ENCODE measurements at regions of chr15 and their contacts with region 1.

Region 1: DNA sequence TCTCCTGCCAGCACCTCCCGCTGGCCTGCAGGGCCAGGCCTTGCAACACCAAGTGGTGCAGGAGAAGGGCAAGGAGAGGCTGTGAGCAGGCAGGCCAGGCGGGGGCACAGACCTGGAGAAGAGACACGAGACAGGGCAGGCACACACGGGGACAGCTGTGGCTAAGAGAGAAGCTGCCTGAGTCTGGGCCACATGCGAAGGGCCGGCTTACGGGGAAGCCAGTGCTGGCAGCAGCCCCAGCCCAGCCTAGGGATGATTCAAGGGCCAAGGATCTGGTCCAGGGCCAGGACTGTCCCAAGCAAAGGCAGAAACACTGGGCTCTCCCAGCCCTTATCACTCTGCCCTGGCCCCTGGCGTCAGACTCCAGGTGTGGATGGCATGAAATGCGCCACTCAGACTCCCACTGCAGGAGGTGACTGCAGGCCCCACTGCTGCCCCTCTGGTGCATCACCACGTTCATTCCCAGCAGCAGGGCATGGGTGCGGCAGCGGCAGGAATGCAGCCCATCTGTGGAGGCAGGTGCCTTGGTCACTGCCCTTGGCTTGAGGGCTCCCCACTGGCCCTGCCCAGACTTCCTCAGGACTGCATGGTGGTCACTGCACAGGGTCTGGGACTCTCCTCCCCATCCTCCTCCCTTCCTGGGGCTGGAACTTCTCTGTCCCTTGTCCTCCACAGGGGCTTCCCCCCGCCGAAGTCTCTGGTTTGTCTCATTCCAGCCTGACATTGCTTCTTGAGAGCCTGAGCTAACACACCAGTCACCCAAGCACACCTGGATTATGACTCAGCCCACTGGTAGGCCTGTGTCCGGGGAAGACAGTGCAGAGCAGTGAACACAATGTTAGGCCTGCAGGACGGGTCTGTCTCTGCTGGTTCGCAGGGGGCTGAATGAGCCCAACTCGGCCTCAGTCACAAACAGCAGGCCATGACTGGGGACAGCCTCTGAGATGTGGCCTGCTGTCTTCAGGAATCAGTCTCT is 69.3 kb downstream of the TBC1D2B start:
- DNase-seq: peak; percentile 82 to 86
- H3K4me3 ChIP-seq: no peak overlapping the region
- H3K27ac ChIP-seq: peak overlapping the region; percentile 49
- H3K4me1 ChIP-seq: peaks cover 41% of the 10 kb centered on the region
- H3K27me3 ChIP-seq: no peaks in the 10 kb centered on the region
- CTCF ChIP-seq: no peak

Region 2: DNA sequence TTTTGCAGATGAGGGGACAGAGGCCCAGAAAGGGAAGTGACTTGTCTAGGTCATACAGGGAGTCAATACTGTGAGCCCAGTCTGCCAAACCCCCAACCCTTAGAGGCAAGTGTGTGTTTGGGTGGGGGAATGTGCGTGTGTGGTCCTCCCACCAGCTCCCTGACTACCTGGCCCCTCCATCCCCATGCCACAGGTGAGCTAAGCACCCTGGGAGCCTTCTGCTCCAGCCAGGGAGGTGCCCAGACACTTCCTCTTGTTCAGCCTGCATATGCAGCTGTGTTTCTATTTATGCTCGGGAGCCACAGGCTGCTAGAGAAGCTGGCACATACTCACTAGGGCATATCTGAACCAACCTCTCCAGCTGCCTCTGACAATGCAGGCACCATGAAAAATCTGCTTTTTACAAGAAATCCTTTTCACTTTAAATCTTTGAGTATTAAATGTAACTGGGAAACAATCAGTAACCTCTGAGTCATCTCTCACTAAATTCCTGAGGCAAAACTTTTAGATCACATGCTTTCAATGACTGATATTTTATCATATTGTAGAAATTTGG is 48.6 kb after region 1 on chr15:
- CTCF ChIA-PET with region 1: no interaction called
- POLR2A ChIA-PET with region 1: interaction called, 27 read pairs
- intact Hi-C with region 1: no loop called
- DNase-seq: no peak
- H3K4me3 ChIP-seq: no peak overlapping the region
- H3K27ac ChIP-seq: peak overlapping the region; percentile 62
- H3K4me1 ChIP-seq: peaks cover 36% of the 10 kb centered on the region
- H3K27me3 ChIP-seq: no peaks in the 10 kb centered on the region
- CTCF ChIP-seq: no peak

Region 3: GRCh38 chr15:78065284-78065872 is 57.2 kb after region 1 on chr15:
- CTCF ChIA-PET with region 1: no interaction called
- POLR2A ChIA-PET with region 1: interaction called, 4 read pairs
- intact Hi-C with region 1: loop called (anchors 1 kb)
- DNase-seq: peak; percentile 74 to 92
- H3K4me3 ChIP-seq: no peak overlapping the region
- H3K27ac ChIP-seq: peak overlapping the region; percentile 66
- H3K4me1 ChIP-seq: peaks cover 48% of the 10 kb centered on the region
- H3K27me3 ChIP-seq: no peaks in the 10 kb centered on the region
- CTCF ChIP-seq: no peak

Region 4: GRCh38 chr15:78075490-78076230 is 67.5 kb after region 1 on chr15:
- CTCF ChIA-PET with region 1: interaction called, 3 read pairs
- POLR2A ChIA-PET with region 1: interaction called, 8 read pairs
- intact Hi-C with region 1: loop called (anchors 2 kb)
- DNase-seq: peak in 1 of 2 experiments; percentile 31
- H3K4me3 ChIP-seq: no peak overlapping the region; the same call in 1 of the 2 replicates
- H3K27ac ChIP-seq: no peak overlapping the region
- H3K4me1 ChIP-seq: peaks cover 17% of the 10 kb centered on the region
- H3K27me3 ChIP-seq: no peaks in the 10 kb centered on the region
- CTCF ChIP-seq: no peak

Region 5: DNA sequence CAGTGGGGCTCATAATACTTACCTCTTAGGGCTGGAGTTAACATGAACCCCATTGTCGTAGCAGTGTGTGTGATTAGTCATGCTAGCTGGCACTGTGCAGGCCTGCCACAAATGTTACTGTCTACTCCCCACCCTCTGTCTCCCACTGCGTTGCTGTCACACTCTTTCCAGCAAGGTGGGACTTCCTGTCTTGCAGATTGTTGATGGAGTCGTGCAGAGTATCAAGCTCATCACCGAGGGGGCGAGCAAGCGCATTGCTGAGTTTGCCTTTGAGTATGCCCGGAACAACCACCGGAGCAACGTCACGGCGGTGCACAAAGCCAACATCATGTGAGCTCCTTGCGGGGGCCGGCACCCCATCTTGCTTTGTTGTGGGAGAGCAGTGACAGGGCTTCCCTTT is 153.8 kb after region 1 on chr15:
- CTCF ChIA-PET with region 1: interaction called, 10 read pairs
- POLR2A ChIA-PET with region 1: no interaction called
- intact Hi-C with region 1: no loop called
- DNase-seq: no peak
- H3K4me3 ChIP-seq: no peak overlapping the region
- H3K27ac ChIP-seq: no peak overlapping the region
- H3K4me1 ChIP-seq: 0 out of 2 replicates have a peak, but pooled peaks cover under 1% of the 10 kb centered on the region
- H3K27me3 ChIP-seq: no peaks in the 10 kb centered on the region
- CTCF ChIP-seq: no peak

Measured in PC-9 (cell line).